ENCODE measurements at regions of chr12 and their contacts with region 1.

Region 1: GRCh38 chr12:102740141-102740955 is 176.7 kb downstream of the PAH start:
- DNase-seq: no peak
- H3K4me3 ChIP-seq: no peak overlapping the region
- H3K27ac ChIP-seq: no peak overlapping the region
- H3K4me1 ChIP-seq: no peaks in the 10 kb centered on the region
- H3K27me3 ChIP-seq: no peaks in the 10 kb centered on the region
- CTCF ChIP-seq: peak; percentile 62

Region 2: DNA sequence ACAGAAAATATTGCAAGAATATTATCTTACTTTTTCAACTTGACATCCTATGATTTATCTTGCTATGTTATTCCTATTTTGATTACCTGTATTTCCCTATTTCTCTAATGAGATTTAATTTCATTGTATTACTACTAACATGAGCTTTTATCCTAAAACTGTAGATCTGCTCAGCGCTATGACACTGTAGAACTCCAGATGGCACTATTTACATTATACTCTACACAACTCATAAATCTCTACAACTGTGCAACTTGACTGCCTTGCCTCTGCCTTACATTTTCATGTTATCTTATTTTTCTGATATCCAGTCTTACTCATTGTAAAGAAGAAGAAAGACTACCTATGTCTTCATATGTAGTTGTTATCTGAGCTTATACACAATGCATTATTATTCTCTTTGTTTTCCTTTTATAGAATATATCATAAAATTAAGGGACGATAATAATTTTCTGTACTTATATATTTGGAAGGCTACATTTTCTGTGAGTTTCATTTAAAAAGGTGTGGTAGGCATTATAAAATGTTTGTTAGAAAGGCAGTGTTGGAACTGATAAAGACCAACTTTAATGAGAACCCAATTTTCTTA is 644.6 kb before region 1 on chr12:
- CTCF ChIA-PET with region 1: interaction called, 5 read pairs
- POLR2A ChIA-PET with region 1: no interaction called
- intact Hi-C with region 1: loop called (anchors 1 kb)
- DNase-seq: peak in 1 of 2 experiments; percentile 41
- H3K4me3 ChIP-seq: no peak overlapping the region
- H3K27ac ChIP-seq: no peak overlapping the region
- H3K4me1 ChIP-seq: no peaks in the 10 kb centered on the region
- H3K27me3 ChIP-seq: no peaks in the 10 kb centered on the region
- CTCF ChIP-seq: peak; percentile 65

Region 3: DNA sequence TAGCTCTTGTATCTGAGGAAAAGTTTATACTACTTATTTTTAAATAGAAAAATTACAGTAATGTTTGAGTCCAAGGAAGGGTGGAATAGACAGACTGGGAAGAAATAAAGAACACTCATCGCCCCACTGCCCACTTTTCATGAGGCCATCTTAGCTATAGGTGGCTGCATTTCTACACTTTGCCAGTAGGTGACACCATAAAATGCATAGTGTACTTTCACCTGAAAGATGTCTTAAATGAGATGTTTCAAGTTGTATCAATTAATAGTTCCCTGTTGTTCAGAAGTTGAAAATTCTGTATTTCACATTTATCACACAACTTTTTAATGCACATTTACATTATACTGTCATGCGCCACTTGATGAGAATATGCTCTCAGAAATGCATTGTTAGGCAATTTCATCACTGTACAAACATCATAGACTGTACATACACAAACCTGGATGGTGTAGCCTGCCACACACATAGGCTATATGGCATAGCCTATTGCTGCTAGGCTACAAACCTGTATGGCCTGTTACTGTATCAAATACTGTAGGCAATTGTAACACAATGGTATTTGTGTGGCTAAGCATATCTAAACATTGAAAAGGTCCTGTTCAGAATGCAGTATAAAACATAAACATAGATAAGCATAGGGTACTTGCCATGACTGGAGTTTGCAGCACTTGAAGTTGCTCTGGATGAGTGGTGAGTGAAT is 570.3 kb before region 1 on chr12:
- CTCF ChIA-PET with region 1: no interaction called
- POLR2A ChIA-PET with region 1: no interaction called
- intact Hi-C with region 1: loop called (anchors 1 kb)
- DNase-seq: no peak
- H3K4me3 ChIP-seq: no peak overlapping the region
- H3K27ac ChIP-seq: no peak overlapping the region
- H3K4me1 ChIP-seq: 0 out of 2 replicates have a peak, but pooled peaks cover 3% of the 10 kb centered on the region
- H3K27me3 ChIP-seq: no peaks in the 10 kb centered on the region
- CTCF ChIP-seq: peak; percentile 74

Region 4: GRCh38 chr12:102300824-102301461 is 439.4 kb before region 1 on chr12:
- CTCF ChIA-PET with region 1: no interaction called
- POLR2A ChIA-PET with region 1: no interaction called
- intact Hi-C with region 1: loop called (anchors 1 kb)
- DNase-seq: peak in 1 of 2 experiments; percentile 45
- H3K4me3 ChIP-seq: no peak overlapping the region
- H3K27ac ChIP-seq: no peak overlapping the region
- H3K4me1 ChIP-seq: no peaks in the 10 kb centered on the region
- H3K27me3 ChIP-seq: no peaks in the 10 kb centered on the region
- CTCF ChIP-seq: peak; percentile 60

Region 5: DNA sequence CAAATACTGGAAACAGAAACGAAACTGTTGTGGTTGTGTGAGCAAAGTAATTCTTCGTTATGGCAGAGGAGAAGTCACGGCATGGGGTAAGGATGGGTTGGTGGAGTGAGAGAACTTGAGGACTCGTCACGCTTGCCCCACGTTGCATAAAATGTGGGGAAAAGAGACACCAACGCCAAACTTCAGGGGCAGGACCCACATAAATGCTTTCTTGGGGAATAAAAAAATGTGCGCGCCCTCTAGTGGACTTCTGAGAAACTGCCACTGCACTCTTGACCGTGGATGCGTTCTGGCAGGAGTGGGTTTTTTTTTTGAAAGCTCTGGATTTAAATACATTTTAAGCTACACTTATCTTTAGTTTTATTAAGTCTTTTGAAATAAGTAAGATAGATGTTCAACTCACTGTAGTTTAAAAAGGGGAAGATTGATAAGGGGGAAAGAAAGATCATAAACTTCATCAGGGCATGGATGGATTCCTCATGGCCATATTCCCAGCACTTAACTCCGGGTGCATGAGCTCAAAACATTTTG is 255.9 kb before region 1 on chr12:
- CTCF ChIA-PET with region 1: no interaction called
- POLR2A ChIA-PET with region 1: no interaction called
- intact Hi-C with region 1: loop called (anchors 5 kb)
- DNase-seq: peak in 1 of 2 experiments; percentile 21
- H3K4me3 ChIP-seq: no peak overlapping the region
- H3K27ac ChIP-seq: no peak overlapping the region
- H3K4me1 ChIP-seq: 0 out of 2 replicates have a peak, but pooled peaks cover 4% of the 10 kb centered on the region
- H3K27me3 ChIP-seq: no peaks in the 10 kb centered on the region
- CTCF ChIP-seq: peak; percentile 95

Region 6: GRCh38 chr12:102652645-102653313 is 87.6 kb before region 1 on chr12:
- CTCF ChIA-PET with region 1: no interaction called
- POLR2A ChIA-PET with region 1: no interaction called
- intact Hi-C with region 1: no loop called
- DNase-seq: no peak
- H3K4me3 ChIP-seq: no peak overlapping the region
- H3K27ac ChIP-seq: no peak overlapping the region
- H3K4me1 ChIP-seq: no peaks in the 10 kb centered on the region
- H3K27me3 ChIP-seq: no peaks in the 10 kb centered on the region
- CTCF ChIP-seq: no peak

Region 7: DNA sequence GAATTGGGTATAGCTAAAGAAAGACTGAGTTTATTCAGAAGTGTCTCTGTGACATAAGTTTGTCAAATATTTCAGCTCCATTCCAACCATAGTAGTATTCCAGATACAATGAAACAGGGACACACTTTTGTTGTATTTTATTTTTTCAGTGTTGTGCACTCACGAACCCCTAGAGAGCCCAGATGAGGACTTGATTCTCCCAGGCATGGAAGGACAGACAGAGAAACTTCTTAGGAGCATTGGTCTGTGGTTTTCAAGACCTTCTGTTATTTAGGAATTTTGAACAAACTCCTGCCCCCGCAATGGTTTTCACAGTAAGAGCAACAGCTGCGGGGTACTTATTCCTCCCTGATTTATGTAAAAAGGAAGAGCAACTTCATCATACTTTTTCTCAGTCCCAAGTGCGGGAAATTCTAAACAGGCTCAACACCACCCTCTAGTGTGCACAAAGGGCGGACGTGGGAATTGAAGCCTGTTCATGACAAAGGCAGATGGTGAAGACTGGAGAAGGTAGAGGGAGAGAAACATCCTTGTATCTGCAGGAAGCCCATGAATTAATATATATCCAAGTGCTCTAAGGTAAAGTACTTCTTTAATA is 29.1 kb after region 1 on chr12:
- CTCF ChIA-PET with region 1: no interaction called
- POLR2A ChIA-PET with region 1: no interaction called
- intact Hi-C with region 1: no loop called
- DNase-seq: peak; percentile 47 to 48
- H3K4me3 ChIP-seq: no peak overlapping the region
- H3K27ac ChIP-seq: no peak overlapping the region
- H3K4me1 ChIP-seq: no peaks in the 10 kb centered on the region
- H3K27me3 ChIP-seq: no peaks in the 10 kb centered on the region
- CTCF ChIP-seq: peak; percentile 78

Region 8: GRCh38 chr12:103012884-103013283 is 272.5 kb after region 1 on chr12:
- CTCF ChIA-PET with region 1: no interaction called
- POLR2A ChIA-PET with region 1: no interaction called
- intact Hi-C with region 1: no loop called
- DNase-seq: no peak
- H3K4me3 ChIP-seq: no peak overlapping the region
- H3K27ac ChIP-seq: no peak overlapping the region
- H3K4me1 ChIP-seq: no peaks in the 10 kb centered on the region
- H3K27me3 ChIP-seq: 0 out of 2 replicates have a peak, but pooled peaks cover 4% of the 10 kb centered on the region
- CTCF ChIP-seq: no peak

Measured in PC-9 (cell line).